ENCODE measurements at regions of chr16 and their contacts with region 1.

Region 1: DNA sequence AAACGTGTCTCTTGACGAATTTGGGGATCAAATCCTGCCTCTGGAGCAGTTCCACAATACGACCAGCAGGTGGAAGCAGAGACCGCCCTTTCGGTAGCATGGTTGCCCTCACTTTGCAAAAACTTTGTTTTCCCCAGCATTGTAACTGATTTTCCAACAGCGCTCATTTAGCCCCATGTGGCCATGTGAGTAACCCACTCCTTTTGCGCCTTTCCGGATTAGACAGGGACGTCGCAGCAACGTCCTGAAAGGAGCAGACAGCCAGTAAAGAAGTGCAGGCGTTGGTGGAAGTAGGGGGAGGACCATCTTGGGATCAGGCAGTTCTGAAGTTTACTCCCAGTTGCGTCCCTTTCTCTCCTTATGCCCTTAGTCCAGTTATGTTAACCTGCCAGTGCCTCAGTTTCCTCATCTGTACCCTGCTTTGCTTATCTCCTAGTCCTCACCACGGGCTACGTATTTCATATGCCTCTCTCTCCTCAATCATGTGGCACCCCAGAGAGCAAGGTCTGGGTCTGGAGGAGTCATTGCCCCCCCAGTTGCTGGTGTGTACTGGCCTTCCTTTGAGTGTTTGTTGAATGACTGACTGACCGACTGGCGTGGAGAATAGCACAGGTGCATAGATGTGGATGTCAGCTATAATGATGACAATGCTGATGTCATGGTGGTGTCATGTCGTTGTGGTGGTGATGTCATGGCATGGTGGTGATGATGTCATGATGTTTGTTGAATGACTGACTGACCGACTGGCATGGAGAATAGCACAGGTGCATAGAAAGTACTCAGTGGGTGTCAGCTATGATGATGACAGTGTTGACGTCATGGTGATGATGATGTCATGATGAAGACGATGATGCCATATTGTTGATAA is 22.3 kb downstream of the TMEM114 start:
- DNase-seq: peak; percentile 62 to 93
- ATAC-seq: peak; percentile 80 to 94
- H3K4me3 ChIP-seq: no peak overlapping the region
- H3K27ac ChIP-seq: peak overlapping the region in 1 of 2 experiments; percentile 34; a peak in 1 of 6 replicates
- H3K4me1 ChIP-seq: peaks cover 10% of the 10 kb centered on the region; the same call in 2 of the 3 replicates
- CTCF ChIP-seq: peak; percentile 99
- EP300 ChIP-seq: no peak
- POLR2A ChIP-seq: no peak
- RAD21 ChIP-seq: peak; percentile 97 to 98

Region 2: GRCh38 chr16:8552487-8553221 is 15.3 kb before region 1 on chr16:
- CTCF ChIA-PET with region 1: interaction called, 20 read pairs
- POLR2A ChIA-PET with region 1: no interaction called
- DNase-seq: no peak
- ATAC-seq: peak in 1 of 2 experiments; percentile 54; a peak in 2 of 6 replicates
- H3K4me3 ChIP-seq: no peak overlapping the region
- H3K27ac ChIP-seq: no peak overlapping the region
- H3K4me1 ChIP-seq: no peaks in the 10 kb centered on the region
- CTCF ChIP-seq: no peak
- EP300 ChIP-seq: no peak
- POLR2A ChIP-seq: no peak
- RAD21 ChIP-seq: no peak

Region 3: DNA sequence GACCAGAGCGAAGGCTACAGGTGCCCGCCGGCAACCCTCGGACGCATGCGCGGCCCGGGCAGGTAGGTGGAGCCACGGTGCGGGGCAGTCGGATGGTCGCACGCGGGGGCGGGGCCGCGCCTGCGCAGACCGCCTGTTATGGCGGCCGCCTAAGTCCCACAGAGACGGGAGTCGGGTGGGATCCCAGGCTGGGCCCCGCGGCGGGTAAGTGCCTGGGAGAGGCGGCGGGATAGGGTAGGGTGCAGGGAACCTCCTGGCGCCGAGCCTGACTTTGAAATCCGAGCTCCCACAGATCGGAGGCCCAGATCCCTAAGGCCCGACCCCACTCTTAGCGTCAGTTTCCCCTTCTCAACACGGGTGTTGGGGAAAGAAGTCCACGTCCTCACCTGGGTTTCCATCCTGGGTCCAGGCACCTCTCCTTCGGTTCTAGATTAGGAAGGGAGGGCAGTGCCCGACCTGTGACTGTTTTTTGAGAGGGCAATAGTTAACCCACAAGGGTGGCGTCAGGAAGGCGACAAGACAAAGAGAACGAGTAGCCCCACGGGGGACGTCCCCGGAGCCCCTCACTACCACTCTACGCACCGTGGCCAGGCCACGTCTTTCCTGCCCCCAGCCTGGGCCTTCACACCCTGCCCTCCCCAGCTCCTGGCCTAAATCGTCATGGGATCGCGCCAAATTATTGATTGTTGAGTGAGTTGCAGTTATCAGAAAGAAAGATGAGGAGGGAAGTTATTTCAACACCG is 53.8 kb after region 1 on chr16 and contains the start of gene METTL22:
- CTCF ChIA-PET with region 1: interaction called, 16 read pairs
- POLR2A ChIA-PET with region 1: no interaction called
- DNase-seq: peak; percentile 88 to 89
- ATAC-seq: peak; percentile 87 to 97
- H3K4me3 ChIP-seq: peak within 1 kb of the TSS; percentile 100
- H3K27ac ChIP-seq: peak within 1 kb of the TSS; percentile 94 to 98
- H3K4me1 ChIP-seq: peaks cover 15% of the 10 kb centered on the region
- CTCF ChIP-seq: no peak
- EP300 ChIP-seq: no peak
- POLR2A ChIP-seq: peak; percentile 76
- RAD21 ChIP-seq: no peak
- polyA plus RNA-seq, gene METTL22: 36.7 and 40.9 TPM in 2 replicates

Region 4: GRCh38 chr16:8634991-8635736 is 67.2 kb after region 1 on chr16:
- CTCF ChIA-PET with region 1: interaction called, 25 read pairs
- POLR2A ChIA-PET with region 1: no interaction called
- DNase-seq: peak; percentile 48 to 64
- ATAC-seq: peak; percentile 87 to 93
- H3K4me3 ChIP-seq: no peak overlapping the region
- H3K27ac ChIP-seq: no peak overlapping the region
- H3K4me1 ChIP-seq: no peaks in the 10 kb centered on the region
- CTCF ChIP-seq: peak; percentile 61
- EP300 ChIP-seq: no peak
- POLR2A ChIP-seq: no peak
- RAD21 ChIP-seq: peak in 1 of 2 experiments; percentile 47; a peak in 3 of 5 replicates

Region 5: GRCh38 chr16:8797364-8798173 is 229.6 kb after region 1 on chr16 and contains the starts of genes PMM2 and TMEM186:
- CTCF ChIA-PET with region 1: interaction called, 11 read pairs
- POLR2A ChIA-PET with region 1: no interaction called
- DNase-seq: peak; percentile 96 to 98
- ATAC-seq: peak; percentile 97 to 98
- H3K4me3 ChIP-seq: peak within 1 kb of the TSS; percentile 88
- H3K27ac ChIP-seq: peak within 1 kb of the TSS; percentile 95 to 96
- H3K4me1 ChIP-seq: peaks cover 28% of the 10 kb centered on the region
- CTCF ChIP-seq: no peak
- EP300 ChIP-seq: no peak
- POLR2A ChIP-seq: peak; percentile 89
- RAD21 ChIP-seq: no peak
- polyA plus RNA-seq, gene PMM2: 46.4 and 56.6 TPM in 2 replicates
- polyA plus RNA-seq, gene TMEM186: 10.9 and 12.1 TPM in 2 replicates

Region 6: GRCh38 chr16:8878521-8878911 is 310.5 kb after region 1 on chr16:
- CTCF ChIA-PET with region 1: interaction called, 33 read pairs
- POLR2A ChIA-PET with region 1: no interaction called
- DNase-seq: peak in 1 of 2 experiments; percentile 51
- ATAC-seq: peak; percentile 48 to 52; a peak in 4 of 6 replicates
- H3K4me3 ChIP-seq: no peak overlapping the region
- H3K27ac ChIP-seq: peak overlapping the region; percentile 71 to 83
- H3K4me1 ChIP-seq: peaks cover 17% of the 10 kb centered on the region
- CTCF ChIP-seq: no peak
- EP300 ChIP-seq: no peak
- POLR2A ChIP-seq: no peak
- RAD21 ChIP-seq: no peak

Measured in A549 (cell line).